GM12878 (cell line): ENCODE measurements at regions of chr4 and their contacts with region 1.

Region 1: GRCh38 chr4:99921174-99921573 is 25.2 kb downstream of the DNAJB14 start:
- DNase-seq: no peak
- ATAC-seq: no peak
- H3K4me3 ChIP-seq: no peak overlapping the region
- H3K27ac ChIP-seq: no peak overlapping the region
- H3K4me1 ChIP-seq: no peaks in the 10 kb centered on the region
- H3K27me3 ChIP-seq: no peaks in the 10 kb centered on the region
- CTCF ChIP-seq: no peak
- EP300 ChIP-seq: no peak
- POLR2A ChIP-seq: no peak
- RAD21 ChIP-seq: no peak

Region 2: DNA sequence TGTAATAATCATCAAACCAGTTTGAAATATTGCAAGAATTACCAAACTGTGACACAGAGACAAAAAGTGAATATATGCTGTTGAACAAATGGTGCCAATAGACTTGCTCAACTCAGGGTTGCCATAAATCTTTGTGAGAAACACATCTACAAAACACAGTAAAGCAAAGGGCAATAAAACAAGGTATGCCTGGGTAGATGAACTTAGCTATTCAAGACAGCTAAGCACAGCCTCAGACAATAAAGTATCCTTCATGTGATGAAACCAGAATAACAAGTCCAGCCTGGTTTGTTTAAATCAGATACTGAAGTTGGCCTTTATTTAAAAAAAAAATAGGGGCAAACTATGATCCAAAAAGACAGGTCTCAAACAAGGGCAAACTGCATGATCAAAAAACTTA is 46.1 kb before region 1 on chr4:
- CTCF ChIA-PET with region 1: no interaction called
- POLR2A ChIA-PET with region 1: no interaction called
- RAD21 ChIA-PET with region 1: no interaction called
- SMC1A ChIA-PET with region 1: no interaction called
- in situ Hi-C with region 1: no loop called
- intact Hi-C with region 1: no loop called
- DNase-seq: no peak
- ATAC-seq: no peak
- H3K4me3 ChIP-seq: no peak overlapping the region
- H3K27ac ChIP-seq: no peak overlapping the region
- H3K4me1 ChIP-seq: no peaks in the 10 kb centered on the region
- H3K27me3 ChIP-seq: no peaks in the 10 kb centered on the region
- CTCF ChIP-seq: no peak
- EP300 ChIP-seq: no peak
- POLR2A ChIP-seq: no peak
- RAD21 ChIP-seq: no peak

Region 3: DNA sequence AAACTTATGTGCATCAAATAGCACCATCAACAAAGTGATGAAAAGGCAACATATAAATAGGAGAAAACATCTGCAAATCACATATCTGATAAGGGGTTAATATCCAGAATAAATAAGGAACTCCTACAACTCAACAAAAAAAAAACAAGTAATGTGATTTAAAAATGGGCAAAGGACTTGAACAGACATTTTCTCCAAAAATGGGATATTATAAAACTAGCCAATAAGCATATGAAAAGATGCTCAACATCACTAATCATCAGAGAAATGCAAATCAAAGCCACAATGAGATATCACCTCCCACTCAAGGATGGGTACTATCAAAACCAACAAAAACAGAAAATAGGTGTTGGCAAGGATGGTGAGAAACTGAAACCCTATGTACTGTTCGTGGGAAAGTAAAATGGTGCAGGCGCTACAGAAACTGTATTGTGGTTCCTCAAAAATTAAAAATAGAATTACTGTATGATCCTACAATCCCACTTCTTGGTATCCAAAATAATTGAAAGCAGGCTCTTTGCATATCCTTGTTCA is 22.8 kb after region 1 on chr4:
- CTCF ChIA-PET with region 1: interaction called, 10 read pairs
- POLR2A ChIA-PET with region 1: interaction called, 3 read pairs
- RAD21 ChIA-PET with region 1: interaction called, 3 read pairs
- SMC1A ChIA-PET with region 1: interaction called, 42 read pairs
- in situ Hi-C with region 1: no loop called
- intact Hi-C with region 1: no loop called
- DNase-seq: no peak
- ATAC-seq: peak; percentile 40
- H3K4me3 ChIP-seq: peak overlapping the region; percentile 90
- H3K27ac ChIP-seq: peak overlapping the region; percentile 20; the same call in 1 of the 2 replicates
- H3K4me1 ChIP-seq: peaks cover 12% of the 10 kb centered on the region; the same call in 1 of the 2 replicates
- H3K27me3 ChIP-seq: no peaks in the 10 kb centered on the region
- CTCF ChIP-seq: no peak
- EP300 ChIP-seq: no peak
- POLR2A ChIP-seq: no peak
- RAD21 ChIP-seq: no peak

Region 4: DNA sequence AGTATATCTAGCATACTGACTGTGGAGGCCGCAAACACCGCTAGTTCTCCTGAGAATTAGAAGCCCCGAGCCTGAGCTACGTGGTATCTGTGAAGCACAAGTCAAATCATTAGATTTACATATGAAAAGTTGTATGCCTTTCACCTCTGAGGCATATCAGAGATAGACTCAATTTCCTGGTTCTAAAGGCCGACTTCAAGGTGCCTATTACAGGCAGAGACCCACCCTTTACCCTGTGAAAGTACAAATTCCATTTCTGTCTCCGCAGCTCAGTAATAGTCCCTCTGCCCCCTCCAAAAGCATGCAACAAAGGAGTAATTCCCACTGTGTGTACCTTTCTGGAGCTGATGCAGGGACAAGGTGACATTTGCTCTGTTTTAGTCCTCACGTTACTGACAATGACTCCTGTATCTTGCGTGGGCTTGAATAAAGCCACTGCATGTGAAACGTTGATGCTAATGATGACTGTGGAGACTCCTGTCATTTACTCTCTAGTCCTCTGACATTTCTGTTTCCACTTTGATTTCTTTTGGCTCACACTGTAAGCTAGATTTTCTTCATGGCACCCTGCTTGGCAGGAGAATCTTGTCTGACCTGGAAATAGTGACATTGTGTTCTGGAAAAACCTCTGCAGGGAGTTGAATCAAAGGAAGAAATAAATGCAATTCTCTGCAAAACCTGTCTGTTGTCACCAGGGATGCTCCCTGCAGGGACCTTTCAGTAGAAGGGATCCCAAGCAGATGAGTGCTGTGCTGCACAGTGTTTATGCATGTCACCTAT is 869.9 kb after region 1 on chr4:
- CTCF ChIA-PET with region 1: no interaction called
- POLR2A ChIA-PET with region 1: no interaction called
- RAD21 ChIA-PET with region 1: no interaction called
- SMC1A ChIA-PET with region 1: no interaction called
- in situ Hi-C with region 1: no loop called
- intact Hi-C with region 1: no loop called
- DNase-seq: no peak
- ATAC-seq: no peak
- H3K4me3 ChIP-seq: no peak overlapping the region
- H3K27ac ChIP-seq: no peak overlapping the region
- H3K4me1 ChIP-seq: no peaks in the 10 kb centered on the region
- H3K27me3 ChIP-seq: no peaks in the 10 kb centered on the region
- CTCF ChIP-seq: no peak
- EP300 ChIP-seq: no peak
- POLR2A ChIP-seq: no peak
- RAD21 ChIP-seq: no peak